ENCODE measurements at regions of chrX and their contacts with region 1.

Region 1: DNA sequence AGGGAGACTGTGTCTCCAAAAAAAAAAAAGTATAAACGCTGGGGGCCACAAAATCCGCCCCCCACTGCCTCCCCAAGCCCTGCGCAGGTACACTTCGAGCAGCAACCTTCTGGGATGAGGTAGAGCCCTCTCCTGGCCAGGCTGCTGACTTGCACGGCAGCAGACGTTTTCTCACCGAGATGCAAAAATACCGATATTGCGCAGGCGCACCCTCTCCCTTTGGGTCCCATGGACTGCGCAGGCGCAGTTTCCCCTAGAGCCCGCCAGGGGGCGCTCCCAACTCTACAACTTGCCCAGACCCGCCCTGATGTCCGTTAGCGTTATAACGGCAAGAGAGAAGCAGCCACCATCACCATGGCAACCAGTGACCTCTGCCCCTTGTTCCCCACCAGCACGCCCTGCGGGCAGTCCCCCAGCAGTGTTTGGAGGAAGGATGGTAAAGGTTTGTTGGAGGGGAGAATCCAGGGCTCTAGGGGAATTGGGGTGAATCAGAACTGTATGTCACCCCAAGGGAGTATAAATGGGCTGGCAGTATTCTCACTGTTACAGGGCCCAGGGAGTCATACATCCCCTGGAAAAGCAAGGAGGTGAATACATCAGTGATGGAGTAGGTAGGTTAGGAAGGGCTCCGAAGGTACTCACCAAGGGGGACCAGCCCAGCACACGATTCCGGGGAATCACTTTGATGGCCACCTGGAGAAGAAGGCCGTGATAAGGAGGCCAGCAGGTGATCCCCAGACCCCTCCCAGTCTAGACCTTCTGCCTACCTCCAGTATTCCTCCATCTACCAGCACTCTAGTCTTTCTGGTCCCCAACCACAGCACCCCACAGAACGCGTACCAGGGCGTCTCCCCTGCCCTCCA is 1.5 kb downstream of the PIM2 start:
- DNase-seq: peak; percentile 85 to 92
- ATAC-seq: peak; percentile 45 to 72 (median 58)
- H3K4me3 ChIP-seq: peak overlapping the region; percentile 91
- H3K4me3 Mint-ChIP-seq: peak overlapping the region; percentile 91
- H3K27ac ChIP-seq: peak overlapping the region; percentile 90
- H3K27ac Mint-ChIP-seq: peak overlapping the region; percentile 96 to 99
- H3K4me1 ChIP-seq: peaks cover 74% of the 10 kb centered on the region
- H3K4me1 Mint-ChIP-seq: peaks cover 48 to 53% of the 10 kb centered on the region in 2 donors
- H3K27me3 ChIP-seq: no peaks in the 10 kb centered on the region
- H3K27me3 Mint-ChIP-seq: peaks cover 0 to 6% of the 10 kb centered on the region in 2 donors
- CTCF ChIP-seq: peak; percentile 76

Region 2: GRCh38 chrX:48648336-48648751 is 269.0 kb before region 1 on chrX:
- intact Hi-C with region 1: loop called (anchors 1 kb)
- DNase-seq: peak; percentile 17 to 72
- ATAC-seq: peak; percentile 53 to 83 (median 80)
- H3K4me3 ChIP-seq: no peak overlapping the region
- H3K4me3 Mint-ChIP-seq: no peak overlapping the region
- H3K27ac ChIP-seq: no peak overlapping the region
- H3K27ac Mint-ChIP-seq: no peak overlapping the region
- H3K4me1 ChIP-seq: no peaks in the 10 kb centered on the region
- H3K4me1 Mint-ChIP-seq: peaks cover 0 to 4% of the 10 kb centered on the region in 2 donors
- H3K27me3 ChIP-seq: no peaks in the 10 kb centered on the region
- H3K27me3 Mint-ChIP-seq: no peaks in the 10 kb centered on the region
- CTCF ChIP-seq: peak; percentile 57

Region 3: GRCh38 chrX:48720577-48721250 is 196.7 kb before region 1 on chrX:
- intact Hi-C with region 1: no loop called
- DNase-seq: peak in 1 of 2 donors; percentile 49
- ATAC-seq: peak; percentile 62 to 75 (median 67)
- H3K4me3 ChIP-seq: no peak overlapping the region
- H3K4me3 Mint-ChIP-seq: no peak overlapping the region
- H3K27ac ChIP-seq: peak overlapping the region; percentile 77
- H3K27ac Mint-ChIP-seq: no peak overlapping the region
- H3K4me1 ChIP-seq: peaks cover 31% of the 10 kb centered on the region
- H3K4me1 Mint-ChIP-seq: peaks cover 14 to 37% of the 10 kb centered on the region in 2 donors
- H3K27me3 ChIP-seq: no peaks in the 10 kb centered on the region
- H3K27me3 Mint-ChIP-seq: no peaks in the 10 kb centered on the region
- CTCF ChIP-seq: no peak

Region 4: GRCh38 chrX:48801280-48802088 is 115.9 kb before region 1 on chrX and contains the start of gene HDAC6:
- intact Hi-C with region 1: loop called (anchors 10 kb)
- DNase-seq: peak; percentile 90 to 97
- ATAC-seq: peak; percentile 80 to 94 (median 81)
- H3K4me3 ChIP-seq: peak within 1 kb of the TSS; percentile 91
- H3K4me3 Mint-ChIP-seq: peak within 1 kb of the TSS; percentile 96
- H3K27ac ChIP-seq: peak within 1 kb of the TSS; percentile 100
- H3K27ac Mint-ChIP-seq: peak within 1 kb of the TSS; percentile 97 to 98
- H3K4me1 ChIP-seq: peaks cover 16% of the 10 kb centered on the region
- H3K4me1 Mint-ChIP-seq: peaks cover 0 to 21% of the 10 kb centered on the region in 2 donors
- H3K27me3 ChIP-seq: no peaks in the 10 kb centered on the region
- H3K27me3 Mint-ChIP-seq: peaks cover 0 to 6% of the 10 kb centered on the region in 2 donors
- CTCF ChIP-seq: no peak
- total RNA-seq, gene HDAC6: 97.4 to 118 (median 101) TPM

Region 5: GRCh38 chrX:48937054-48937907 is 19.9 kb after region 1 on chrX:
- intact Hi-C with region 1: loop called (anchors 1 kb)
- DNase-seq: peak; percentile 78 to 92
- ATAC-seq: peak; percentile 72 to 89 (median 86)
- H3K4me3 ChIP-seq: peak overlapping the region; percentile 19
- H3K4me3 Mint-ChIP-seq: peak overlapping the region; percentile 82
- H3K27ac ChIP-seq: peak overlapping the region; percentile 99
- H3K27ac Mint-ChIP-seq: peak overlapping the region; percentile 95 to 97
- H3K4me1 ChIP-seq: peaks cover 85% of the 10 kb centered on the region
- H3K4me1 Mint-ChIP-seq: peaks cover 60 to 79% of the 10 kb centered on the region in 2 donors
- H3K27me3 ChIP-seq: no peaks in the 10 kb centered on the region
- H3K27me3 Mint-ChIP-seq: peaks cover 0 to 6% of the 10 kb centered on the region in 2 donors
- CTCF ChIP-seq: peak; percentile 33

Region 6: DNA sequence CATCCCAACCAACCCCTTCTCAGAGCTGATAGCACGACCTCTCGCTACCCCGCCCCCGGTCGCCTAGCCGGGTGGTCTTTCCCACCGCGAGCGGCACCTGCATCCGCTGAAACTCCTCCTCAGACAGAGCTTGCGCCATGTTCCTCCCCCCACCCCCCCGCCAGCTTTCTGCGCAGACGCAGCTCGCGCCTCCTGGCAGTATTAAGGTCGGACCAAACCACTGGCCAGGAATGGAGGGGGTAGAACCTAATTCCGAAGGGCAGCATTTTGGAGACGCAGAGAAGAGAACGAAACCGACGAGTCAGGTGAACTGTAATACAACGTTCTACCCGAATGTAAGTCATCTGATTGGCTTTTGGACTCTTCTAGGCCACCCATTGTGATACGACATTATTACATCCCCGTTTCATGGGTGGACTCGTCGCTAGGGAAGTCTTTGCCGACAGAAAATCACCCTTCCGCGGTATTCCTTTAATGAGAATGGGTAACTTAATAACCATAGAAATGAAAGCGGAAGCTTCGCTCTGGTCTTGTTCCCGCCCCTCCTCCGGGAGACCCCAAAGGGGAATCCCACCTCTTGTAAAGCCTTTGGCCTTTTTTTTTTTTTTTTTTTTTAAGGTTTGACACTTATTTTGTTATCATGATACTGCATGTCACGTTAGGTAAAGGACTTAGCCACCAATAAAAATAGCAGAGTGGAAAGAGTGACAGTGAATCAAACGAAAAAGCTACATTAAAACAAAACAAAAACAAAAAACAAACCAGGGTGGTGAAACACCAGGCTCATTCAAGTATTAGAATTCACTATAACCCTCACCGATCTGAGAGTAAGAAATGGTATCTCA is 84.9 kb after region 1 on chrX and contains the start of gene GRIPAP1:
- intact Hi-C with region 1: loop called (anchors 10 kb)
- DNase-seq: peak; percentile 67 to 94
- ATAC-seq: peak; percentile 77 to 89 (median 78)
- H3K4me3 ChIP-seq: peak within 1 kb of the TSS; percentile 98
- H3K4me3 Mint-ChIP-seq: peak within 1 kb of the TSS; percentile 97
- H3K27ac ChIP-seq: peak within 1 kb of the TSS; percentile 99
- H3K27ac Mint-ChIP-seq: peak within 1 kb of the TSS; percentile 97 to 99
- H3K4me1 ChIP-seq: peaks cover 22% of the 10 kb centered on the region
- H3K4me1 Mint-ChIP-seq: peaks cover 16 to 35% of the 10 kb centered on the region in 2 donors
- H3K27me3 ChIP-seq: no peaks in the 10 kb centered on the region
- H3K27me3 Mint-ChIP-seq: no peaks in the 10 kb centered on the region
- CTCF ChIP-seq: no peak
- total RNA-seq, gene GRIPAP1: 120 to 141 (median 131) TPM

Region 7: DNA sequence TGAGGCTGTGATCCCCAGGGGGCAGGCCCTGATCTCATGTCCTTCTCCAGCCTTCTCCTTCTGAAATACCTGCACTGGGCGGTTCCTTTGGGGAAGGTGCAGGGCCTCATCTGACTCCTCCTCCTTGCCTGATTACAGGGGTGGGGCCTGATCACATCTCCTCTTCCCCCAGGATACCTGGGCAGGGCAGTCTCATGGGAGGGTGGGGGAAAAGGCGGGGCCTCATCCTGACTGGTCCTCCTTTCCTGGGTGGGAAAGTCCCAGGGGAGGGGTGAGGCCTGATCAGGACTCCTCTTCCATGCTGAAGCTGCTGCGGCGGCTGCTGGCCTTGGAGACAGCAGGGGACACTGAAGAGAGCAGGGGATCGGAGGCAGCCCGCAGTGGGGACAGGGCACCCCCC is 112.5 kb after region 1 on chrX:
- intact Hi-C with region 1: no loop called
- DNase-seq: no peak
- ATAC-seq: peak in 2 of 3 donors; percentile 12 to 15
- H3K4me3 ChIP-seq: no peak overlapping the region
- H3K4me3 Mint-ChIP-seq: no peak overlapping the region
- H3K27ac ChIP-seq: no peak overlapping the region
- H3K27ac Mint-ChIP-seq: no peak overlapping the region
- H3K4me1 ChIP-seq: no peaks in the 10 kb centered on the region
- H3K4me1 Mint-ChIP-seq: no peaks in the 10 kb centered on the region
- H3K27me3 ChIP-seq: no peaks in the 10 kb centered on the region
- H3K27me3 Mint-ChIP-seq: no peaks in the 10 kb centered on the region
- CTCF ChIP-seq: no peak

Region 8: DNA sequence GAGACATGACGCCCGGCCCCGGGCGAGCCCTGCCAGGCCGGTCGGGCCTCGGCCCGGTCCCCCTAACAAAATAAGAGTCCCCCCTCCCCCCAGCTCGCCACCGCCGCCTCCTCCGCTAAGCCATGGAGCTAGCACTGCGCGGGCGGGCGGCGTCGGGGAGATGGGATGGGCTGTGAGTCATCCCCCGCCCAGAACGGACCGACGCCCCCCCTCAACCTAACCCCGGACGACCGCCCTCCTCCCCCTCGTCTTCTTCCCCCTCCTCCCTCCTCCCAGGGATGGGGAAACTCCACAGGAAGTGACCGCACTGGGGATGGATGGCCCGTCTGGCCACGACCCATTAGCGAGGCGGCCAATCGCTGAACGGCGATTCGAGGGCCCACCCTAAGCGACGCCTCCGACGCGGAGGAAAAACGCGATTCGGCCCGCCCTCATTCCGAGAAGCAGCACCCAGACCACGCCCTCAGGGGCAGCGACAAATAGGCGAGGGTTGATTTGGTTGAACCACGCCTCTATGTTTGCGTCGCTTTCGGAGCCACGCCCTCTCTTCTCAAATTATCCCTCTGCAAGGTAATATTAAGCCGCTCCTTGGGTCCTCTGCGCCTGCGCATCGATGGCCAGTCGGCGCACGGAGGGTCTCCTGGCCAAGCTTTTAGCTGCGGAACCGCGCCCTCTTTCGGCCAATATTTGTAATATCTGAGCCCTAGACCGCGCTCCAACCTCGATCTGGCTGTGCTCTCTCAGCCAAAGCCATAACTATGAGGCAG is 126.0 kb after region 1 on chrX and contains the start of gene TFE3:
- intact Hi-C with region 1: loop called (anchors 5 kb)
- DNase-seq: peak; percentile 90 to 97
- ATAC-seq: peak; percentile 86 to 95 (median 86)
- H3K4me3 ChIP-seq: peak within 1 kb of the TSS; percentile 66
- H3K4me3 Mint-ChIP-seq: peak within 1 kb of the TSS; percentile 86
- H3K27ac ChIP-seq: peak within 1 kb of the TSS; percentile 94
- H3K27ac Mint-ChIP-seq: peak within 1 kb of the TSS; percentile 89 to 92
- H3K4me1 ChIP-seq: peaks cover 33% of the 10 kb centered on the region
- H3K4me1 Mint-ChIP-seq: peaks cover 23 to 33% of the 10 kb centered on the region in 2 donors
- H3K27me3 ChIP-seq: no peaks in the 10 kb centered on the region
- H3K27me3 Mint-ChIP-seq: no peaks in the 10 kb centered on the region
- CTCF ChIP-seq: peak; percentile 30
- total RNA-seq, gene TFE3: 43.8 to 57.5 (median 43.9) TPM

Measured in natural killer cell (primary cell).